Keratinocyte (primary cell): ENCODE measurements at regions of chr13 and their contacts with region 1.

Region 1: DNA sequence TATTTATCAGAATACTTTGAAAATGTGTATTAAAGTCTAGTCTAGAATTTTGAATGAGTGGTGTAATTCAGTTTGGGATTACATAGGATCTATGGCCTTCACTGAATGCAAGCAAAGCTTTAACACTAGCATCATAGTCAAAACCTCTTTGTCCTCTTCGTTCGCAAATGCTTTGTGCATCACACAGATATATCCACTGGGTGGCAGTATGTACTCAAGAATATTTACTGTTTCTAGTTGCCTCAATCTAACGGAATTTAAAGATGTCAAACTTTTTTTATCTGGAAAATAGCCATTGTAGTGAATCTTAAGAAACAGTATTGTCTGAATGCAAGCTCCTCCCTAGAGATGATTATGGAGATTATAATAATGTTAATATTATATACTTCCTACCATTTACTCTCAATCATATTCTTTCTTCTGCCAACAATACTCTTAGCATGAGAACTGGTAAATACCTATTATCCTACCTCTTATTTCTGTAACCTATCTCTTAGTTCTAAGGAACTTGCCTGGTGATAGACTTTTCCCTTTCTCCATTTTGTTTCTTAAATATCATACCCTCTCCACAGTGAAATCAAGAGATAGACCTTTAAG is 25.8 kb downstream of the LACC1 start:
- DNase-seq: no peak
- H3K4me3 ChIP-seq: no peak overlapping the region
- H3K27ac ChIP-seq: no peak overlapping the region
- H3K4me1 ChIP-seq: peaks cover 4% of the 10 kb centered on the region
- H3K27me3 ChIP-seq: no peaks in the 10 kb centered on the region
- CTCF ChIP-seq: peak in 2 of 3 experiments; percentile 45 to 70

Region 2: DNA sequence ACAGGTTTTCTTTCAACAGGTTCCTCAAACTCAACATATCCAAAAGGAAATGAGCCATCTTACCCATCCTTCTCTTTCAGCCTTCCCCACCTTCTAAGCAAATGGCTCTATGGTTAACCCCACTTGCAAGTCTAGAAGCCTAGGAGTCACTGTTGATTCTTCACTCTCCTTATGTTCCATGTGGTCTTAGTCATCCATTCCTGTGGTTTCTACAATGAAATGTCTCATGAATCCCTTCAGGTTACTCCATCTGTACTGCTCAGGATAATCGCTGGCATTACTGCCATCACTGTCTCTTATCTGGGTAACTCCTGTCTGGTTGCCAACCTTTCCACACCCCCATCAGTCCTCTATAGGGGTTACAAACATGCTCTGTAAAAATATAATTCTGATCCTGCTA is 500.1 kb before region 1 on chr13:
- dilution Hi-C with region 1: no loop called
- DNase-seq: peak; percentile 28
- H3K4me3 ChIP-seq: no peak overlapping the region
- H3K27ac ChIP-seq: no peak overlapping the region
- H3K4me1 ChIP-seq: peaks cover 10% of the 10 kb centered on the region
- H3K27me3 ChIP-seq: no peaks in the 10 kb centered on the region
- CTCF ChIP-seq: peak in 2 of 3 experiments; percentile 12 to 19

Region 3: GRCh38 chr13:44449999-44450708 is 544.6 kb after region 1 on chr13:
- dilution Hi-C with region 1: loop called (anchors 10 kb)
- DNase-seq: no peak
- H3K4me3 ChIP-seq: no peak overlapping the region
- H3K27ac ChIP-seq: no peak overlapping the region
- H3K4me1 ChIP-seq: no peaks in the 10 kb centered on the region
- H3K27me3 ChIP-seq: no peaks in the 10 kb centered on the region
- CTCF ChIP-seq: no peak